SK-N-SH (cell line): ENCODE measurements at regions of chr6 and their contacts with region 1.

Region 1: GRCh38 chr6:125759184-125759902 is 9.9 kb downstream of the HEY2 start:
- DNase-seq: peak; percentile 87
- H3K4me3 ChIP-seq: peak overlapping the region; percentile 27 to 37
- H3K27ac ChIP-seq: no peak overlapping the region
- H3K4me1 ChIP-seq: peaks cover 0 to 8% of the 10 kb centered on the region in 2 experiments; a peak in 1 of 4 replicates
- H3K27me3 ChIP-seq: peaks cover 68% of the 10 kb centered on the region
- CTCF ChIP-seq: peak; percentile 73
- EP300 ChIP-seq: no peak
- RAD21 ChIP-seq: peak; percentile 51

Region 2: GRCh38 chr6:125597411-125598253 is 161.7 kb before region 1 on chr6:
- CTCF ChIA-PET with region 1: no interaction called
- POLR2A ChIA-PET with region 1: no interaction called
- DNase-seq: no peak
- H3K4me3 ChIP-seq: no peak overlapping the region
- H3K27ac ChIP-seq: no peak overlapping the region
- H3K4me1 ChIP-seq: no peaks in the 10 kb centered on the region
- H3K27me3 ChIP-seq: no peaks in the 10 kb centered on the region
- CTCF ChIP-seq: no peak
- EP300 ChIP-seq: no peak
- RAD21 ChIP-seq: no peak

Region 3: DNA sequence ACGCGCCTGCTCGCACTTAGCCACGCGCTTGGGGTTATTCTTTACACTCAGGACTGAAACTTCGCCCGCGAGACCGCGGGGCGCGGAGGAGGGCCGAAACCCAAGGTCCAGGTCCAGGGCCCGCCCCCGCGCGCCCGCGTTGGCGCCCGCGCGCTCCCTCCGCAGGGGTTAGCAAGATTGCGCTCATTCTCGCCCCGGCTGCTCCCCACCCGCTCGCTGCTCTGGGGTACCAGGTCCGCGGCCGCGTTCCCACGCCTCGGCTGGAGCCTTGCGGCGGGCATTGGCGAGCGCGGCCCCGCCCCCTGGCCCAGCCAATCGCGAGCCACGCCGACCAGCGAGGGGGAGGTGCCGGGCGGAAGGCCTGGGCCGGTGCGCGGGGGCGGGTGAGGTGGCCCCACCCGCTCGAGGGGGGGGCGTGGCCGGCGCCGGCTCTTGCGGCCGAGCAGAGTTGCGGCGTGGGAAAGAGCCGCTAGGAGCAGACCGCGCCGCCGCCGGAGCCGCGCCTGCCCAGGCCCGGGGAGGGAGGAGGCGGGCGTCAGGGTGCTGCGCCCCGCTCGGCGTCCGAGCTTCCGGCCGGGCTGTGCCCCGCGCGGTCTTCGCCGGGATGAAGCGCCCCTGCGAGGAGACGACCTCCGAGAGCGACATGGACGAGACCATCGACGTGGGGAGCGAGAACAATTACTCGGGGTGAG is 10.0 kb before region 1 on chr6 and contains the start of gene HEY2:
- CTCF ChIA-PET with region 1: interaction called, 11 read pairs
- POLR2A ChIA-PET with region 1: interaction called, 3 read pairs
- DNase-seq: peak; percentile 99
- H3K4me3 ChIP-seq: peak within 1 kb of the TSS; percentile 55 to 61
- H3K27ac ChIP-seq: no peak within 1 kb of the TSS
- H3K4me1 ChIP-seq: peaks cover 0 to 18% of the 10 kb centered on the region in 2 experiments; a peak in 2 of 4 replicates
- H3K27me3 ChIP-seq: peaks cover 67% of the 10 kb centered on the region
- CTCF ChIP-seq: no peak
- EP300 ChIP-seq: no peak
- RAD21 ChIP-seq: no peak
- polyA plus RNA-seq, gene HEY2: not detected in 2 replicates

Region 4: DNA sequence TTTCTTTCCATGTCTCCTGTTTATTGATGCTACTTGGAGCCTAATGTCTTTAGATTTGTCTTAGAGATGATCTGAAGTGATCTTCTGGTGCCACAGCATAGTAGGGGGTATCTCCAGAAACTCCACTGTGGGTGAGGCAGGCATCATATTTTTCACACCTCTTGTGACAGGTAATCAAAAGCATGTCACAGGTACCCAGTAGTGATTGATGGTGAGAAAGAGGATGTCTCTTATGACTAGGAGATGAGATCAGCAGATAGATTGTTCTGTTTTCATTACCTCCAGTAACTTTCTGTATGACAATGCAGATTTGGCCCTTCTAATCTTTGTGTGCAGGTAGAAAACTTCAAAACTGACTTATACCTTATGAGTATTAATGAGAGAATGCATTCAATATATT is 44.9 kb after region 1 on chr6:
- CTCF ChIA-PET with region 1: no interaction called
- POLR2A ChIA-PET with region 1: no interaction called
- DNase-seq: no peak
- H3K4me3 ChIP-seq: no peak overlapping the region
- H3K27ac ChIP-seq: peak overlapping the region in 1 of 2 experiments; percentile 63; a peak in 2 of 4 replicates
- H3K4me1 ChIP-seq: peaks cover 12 to 17% of the 10 kb centered on the region in 2 experiments; a peak in 3 of 4 replicates
- H3K27me3 ChIP-seq: no peaks in the 10 kb centered on the region
- CTCF ChIP-seq: no peak
- EP300 ChIP-seq: no peak
- RAD21 ChIP-seq: no peak